H1 (cell line): ENCODE measurements at regions of chr16 and their contacts with region 1.

Region 1: DNA sequence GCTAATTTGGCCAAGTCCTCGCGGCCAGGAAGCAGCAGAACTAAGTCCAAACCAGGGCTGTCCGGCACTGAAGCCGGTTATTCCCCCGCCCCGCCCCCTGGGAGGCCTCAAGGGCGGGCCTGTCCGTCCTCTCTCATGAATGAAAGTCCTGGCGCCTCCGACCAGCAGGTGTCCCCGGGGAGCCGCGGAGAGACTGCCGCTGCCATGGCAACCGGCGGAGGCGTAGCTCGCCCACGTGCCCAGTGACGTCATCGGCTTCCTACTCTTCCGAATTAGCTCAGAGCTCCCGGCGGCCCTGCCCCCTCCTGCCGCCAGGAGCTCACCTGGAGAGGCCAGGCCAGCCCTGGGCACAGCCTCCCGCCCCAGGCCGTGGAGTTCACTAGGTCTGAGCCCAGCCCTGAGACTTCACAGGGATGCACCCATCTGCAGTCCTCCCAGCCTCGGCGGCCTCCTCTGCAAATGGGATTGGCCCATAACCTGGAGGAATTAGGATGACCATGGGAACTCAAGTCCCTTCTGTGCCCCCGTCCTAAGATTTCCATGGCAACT is 1.3 kb downstream of the SPATA2L start:
- DNase-seq: peak; percentile 98
- H3K4me3 ChIP-seq: peak overlapping the region; percentile 49 to 78 (median 74)
- H3K27ac ChIP-seq: peak overlapping the region; percentile 28; the same call in 1 of the 2 replicates
- H3K4me1 ChIP-seq: peaks cover 0 to 11% (median 5%) of the 10 kb centered on the region in 4 experiments; a peak in 5 of 7 replicates
- H3K27me3 ChIP-seq: peaks cover 0 to 9% (median 2%) of the 10 kb centered on the region in 4 experiments; a peak in 3 of 7 replicates
- CTCF ChIP-seq: peak; percentile 22 to 56 (median 32)
- EP300 ChIP-seq: peak in 1 of 2 experiments; percentile 73; a peak in 1 of 3 replicates
- POLR2A ChIP-seq: peak in 1 of 2 experiments; percentile 53; a peak in 1 of 3 replicates
- RAD21 ChIP-seq: peak; percentile 54 to 61

Region 2: DNA sequence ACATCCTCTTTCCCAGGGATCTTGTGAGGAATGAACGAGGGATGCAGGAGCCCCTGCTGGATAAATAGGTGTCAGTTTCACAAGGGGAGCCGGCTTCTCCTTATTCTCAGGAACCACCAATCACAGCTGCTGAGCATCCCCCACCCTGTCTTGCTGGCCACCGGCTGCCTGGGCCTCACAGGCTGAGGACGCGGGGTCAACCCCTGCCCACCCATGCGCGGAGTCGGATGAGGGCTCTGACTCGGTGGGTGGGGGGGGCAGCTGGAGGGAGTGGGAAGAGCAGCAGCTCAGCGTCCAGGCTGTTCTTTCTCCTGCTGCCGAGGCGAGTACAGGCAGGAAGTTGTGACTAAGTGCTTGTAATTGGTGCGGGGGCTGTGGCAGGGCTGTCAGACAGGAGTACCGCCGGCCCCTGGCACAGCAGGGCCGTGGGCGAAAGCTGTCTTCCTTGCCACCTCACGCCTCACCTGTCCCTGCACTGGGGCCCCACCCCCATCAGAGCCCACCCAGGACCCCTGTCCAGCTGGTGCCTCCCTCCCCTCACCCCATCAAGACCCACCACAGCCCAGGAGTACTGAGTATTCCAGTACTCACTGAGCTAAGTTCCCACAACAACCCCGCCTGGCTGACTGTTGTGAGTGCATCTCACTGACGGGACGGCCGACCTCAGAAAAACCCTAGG is 97.8 kb before region 1 on chr16:
- CTCF ChIA-PET with region 1: interaction called, 14 read pairs
- POLR2A ChIA-PET with region 1: interaction called, 4 read pairs
- DNase-seq: peak in 1 of 2 experiments; percentile 74
- H3K4me3 ChIP-seq: peak overlapping the region in 1 of 4 experiments; percentile 15; a peak in 2 of 8 replicates
- H3K27ac ChIP-seq: no peak overlapping the region
- H3K4me1 ChIP-seq: peaks cover 0 to 11% (median 9%) of the 10 kb centered on the region in 4 experiments; a peak in 5 of 7 replicates
- H3K27me3 ChIP-seq: no peaks in the 10 kb centered on the region; a peak in 1 of 7 replicates
- CTCF ChIP-seq: no peak
- EP300 ChIP-seq: no peak
- POLR2A ChIP-seq: peak in 1 of 2 experiments; percentile 43; a peak in 1 of 3 replicates
- RAD21 ChIP-seq: no peak

Region 3: DNA sequence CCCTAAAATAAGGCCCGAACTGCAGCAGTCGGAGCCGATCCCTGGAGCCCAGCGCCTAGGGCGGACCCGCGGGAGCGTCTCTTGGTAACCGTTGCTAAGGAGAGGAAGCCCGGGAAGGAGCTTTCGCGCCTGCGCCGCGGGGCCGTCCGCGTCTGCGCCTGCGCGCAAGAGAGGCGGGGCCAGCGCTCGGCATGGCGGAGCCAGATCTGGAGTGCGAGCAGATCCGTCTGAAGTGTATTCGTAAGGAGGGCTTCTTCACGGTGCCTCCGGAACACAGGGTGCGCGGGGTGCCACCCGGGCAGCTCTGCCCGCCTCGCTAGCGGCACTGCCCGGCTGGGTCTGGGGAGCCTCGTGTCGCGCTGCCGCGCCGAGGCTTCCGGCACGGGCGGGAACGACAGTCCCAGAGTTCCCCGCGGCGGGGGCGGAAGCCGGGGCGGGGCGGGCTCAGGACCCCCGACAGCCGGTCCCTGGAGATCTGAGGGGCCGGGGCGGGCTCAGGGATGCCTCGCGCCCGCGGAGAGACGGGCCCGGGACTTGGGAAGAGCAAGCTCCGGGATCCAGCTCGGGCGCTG is 13.6 kb before region 1 on chr16 and contains the start of gene CDK10:
- CTCF ChIA-PET with region 1: interaction called, 16 read pairs
- POLR2A ChIA-PET with region 1: interaction called, 59 read pairs
- DNase-seq: peak in 1 of 2 experiments; percentile 99
- H3K4me3 ChIP-seq: peak within 1 kb of the TSS; percentile 69 to 93 (median 84)
- H3K27ac ChIP-seq: peak within 1 kb of the TSS; percentile 91
- H3K4me1 ChIP-seq: peaks cover 0 to 7% (median 2%) of the 10 kb centered on the region in 4 experiments; a peak in 4 of 7 replicates
- H3K27me3 ChIP-seq: no peaks in the 10 kb centered on the region
- CTCF ChIP-seq: no peak
- EP300 ChIP-seq: no peak
- POLR2A ChIP-seq: peak; percentile 84 to 85
- RAD21 ChIP-seq: no peak
- total RNA-seq, gene CDK10: 76.8 and 83.9 TPM in 2 replicates

Region 4: DNA sequence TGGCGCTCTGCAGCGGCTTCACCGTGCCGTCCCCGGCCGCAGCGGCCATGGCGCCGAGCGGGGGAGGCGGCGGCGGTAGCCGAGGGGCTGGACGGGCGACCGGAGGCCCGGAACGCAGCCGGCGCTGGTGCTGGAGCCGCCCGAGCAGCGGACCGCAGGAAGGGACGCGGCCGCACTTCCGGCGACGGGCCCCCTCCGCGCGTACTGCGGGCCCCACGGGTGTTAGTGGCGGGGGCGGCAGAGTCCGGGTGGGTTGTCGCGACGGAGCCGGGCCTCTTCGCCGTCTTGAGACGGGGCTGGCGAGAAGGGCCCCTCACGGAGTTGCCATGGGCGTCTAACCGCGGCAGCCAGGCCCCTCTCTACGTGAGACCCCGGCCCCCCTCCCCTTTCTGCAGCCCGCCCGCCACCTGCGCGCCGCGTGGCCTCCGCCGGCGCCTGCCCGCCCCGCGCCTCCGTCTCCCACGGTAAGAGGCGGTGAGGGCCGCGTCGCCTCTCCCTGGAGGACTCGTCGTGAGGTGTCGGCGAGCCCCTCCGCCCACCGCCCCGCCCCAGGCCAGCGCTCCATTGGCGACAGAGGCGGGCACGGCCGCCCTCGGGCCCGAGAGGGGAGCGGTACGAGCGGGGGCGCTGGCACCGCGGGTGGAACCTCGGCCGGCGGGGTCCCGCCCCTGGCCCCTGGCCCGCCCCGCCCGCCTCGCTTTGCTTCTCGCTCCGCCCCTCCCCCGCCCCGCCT is 20.8 kb after region 1 on chr16 and contains the starts of genes VPS9D1 and ZNF276:
- CTCF ChIA-PET with region 1: interaction called, 11 read pairs
- POLR2A ChIA-PET with region 1: interaction called, 193 read pairs
- DNase-seq: peak in 1 of 2 experiments; percentile 89
- H3K4me3 ChIP-seq: peak within 1 kb of the TSS; percentile 64 to 87 (median 68)
- H3K27ac ChIP-seq: peak within 1 kb of the TSS; percentile 52; the same call in 1 of the 2 replicates
- H3K4me1 ChIP-seq: peaks cover 0 to 13% (median 10%) of the 10 kb centered on the region in 4 experiments; a peak in 5 of 7 replicates
- H3K27me3 ChIP-seq: peaks cover 8 to 58% (median 46%) of the 10 kb centered on the region in 4 experiments
- CTCF ChIP-seq: no peak
- EP300 ChIP-seq: no peak
- POLR2A ChIP-seq: peak in 1 of 2 experiments; percentile 67; a peak in 2 of 3 replicates
- RAD21 ChIP-seq: no peak
- total RNA-seq, gene VPS9D1: 5.4 and 5.8 TPM in 2 replicates
- total RNA-seq, gene ZNF276: 9.3 and 9.6 TPM in 2 replicates

Region 5: GRCh38 chr16:89749647-89750046 is 49.5 kb after region 1 on chr16:
- CTCF ChIA-PET with region 1: interaction called, 26 read pairs
- POLR2A ChIA-PET with region 1: interaction called, 4 read pairs
- DNase-seq: no peak
- H3K4me3 ChIP-seq: no peak overlapping the region
- H3K27ac ChIP-seq: no peak overlapping the region
- H3K4me1 ChIP-seq: no peaks in the 10 kb centered on the region
- H3K27me3 ChIP-seq: no peaks in the 10 kb centered on the region
- CTCF ChIP-seq: no peak
- EP300 ChIP-seq: no peak
- POLR2A ChIP-seq: no peak
- RAD21 ChIP-seq: no peak